H1 (cell line): ENCODE measurements at regions of chr3 and their contacts with region 1.

Region 1: DNA sequence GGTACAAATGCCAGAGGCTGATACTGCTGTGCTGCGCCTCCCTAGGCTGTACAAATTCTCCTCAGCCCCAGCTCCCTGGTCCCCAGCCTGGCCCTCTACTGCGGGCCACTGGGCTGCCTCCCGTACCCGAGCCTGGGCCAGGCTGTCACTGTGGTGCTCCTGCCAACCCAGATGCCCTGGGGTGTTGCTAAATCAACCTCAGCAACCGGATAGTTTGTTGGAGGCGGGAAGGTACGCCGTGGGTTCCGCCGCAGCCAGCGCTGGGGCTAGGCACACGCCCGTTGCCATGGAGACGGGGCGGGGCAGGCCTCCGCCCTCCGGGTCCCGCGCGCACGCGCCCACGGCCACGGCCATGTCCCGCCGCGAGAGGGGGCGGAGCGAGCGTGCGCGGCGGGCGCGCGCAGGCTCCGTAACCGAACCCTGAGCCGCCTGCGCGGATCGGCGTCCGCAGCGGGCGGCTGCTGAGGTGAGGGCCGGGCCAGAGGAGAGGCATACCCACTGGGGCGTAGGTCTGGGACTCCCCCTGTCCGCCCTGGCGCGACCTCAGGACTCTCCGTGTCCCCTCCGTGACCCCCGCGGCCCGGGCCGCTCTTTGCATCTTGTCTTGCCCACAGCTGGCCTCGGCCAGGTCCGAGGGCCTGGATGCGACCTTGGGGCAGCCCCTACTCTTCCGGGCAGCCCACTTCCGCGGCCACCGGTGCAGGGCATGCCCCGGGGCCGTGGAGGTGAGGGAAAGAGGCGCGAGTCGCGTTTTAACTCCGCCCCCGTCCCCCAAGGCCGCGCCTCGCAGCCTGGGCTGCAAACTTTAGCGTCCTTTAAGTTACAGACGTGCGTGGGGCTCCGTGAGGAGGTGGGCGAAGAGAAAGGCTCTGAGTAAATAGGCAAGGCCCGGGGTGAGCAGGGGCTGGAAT is at the start of gene TEX264:
- DNase-seq: peak in 1 of 2 experiments; percentile 82
- H3K4me3 ChIP-seq: peak within 1 kb of the TSS; percentile 59 to 82 (median 69)
- H3K27ac ChIP-seq: no peak within 1 kb of the TSS
- H3K4me1 ChIP-seq: peaks cover 0 to 10% (median 5%) of the 10 kb centered on the region in 4 experiments; a peak in 4 of 7 replicates
- H3K27me3 ChIP-seq: no peaks in the 10 kb centered on the region
- CTCF ChIP-seq: no peak
- EP300 ChIP-seq: no peak
- POLR2A ChIP-seq: peak in 1 of 2 experiments; percentile 12; a peak in 1 of 3 replicates
- RAD21 ChIP-seq: no peak
- total RNA-seq, gene TEX264: 11.2 and 11.9 TPM in 2 replicates

Region 2: DNA sequence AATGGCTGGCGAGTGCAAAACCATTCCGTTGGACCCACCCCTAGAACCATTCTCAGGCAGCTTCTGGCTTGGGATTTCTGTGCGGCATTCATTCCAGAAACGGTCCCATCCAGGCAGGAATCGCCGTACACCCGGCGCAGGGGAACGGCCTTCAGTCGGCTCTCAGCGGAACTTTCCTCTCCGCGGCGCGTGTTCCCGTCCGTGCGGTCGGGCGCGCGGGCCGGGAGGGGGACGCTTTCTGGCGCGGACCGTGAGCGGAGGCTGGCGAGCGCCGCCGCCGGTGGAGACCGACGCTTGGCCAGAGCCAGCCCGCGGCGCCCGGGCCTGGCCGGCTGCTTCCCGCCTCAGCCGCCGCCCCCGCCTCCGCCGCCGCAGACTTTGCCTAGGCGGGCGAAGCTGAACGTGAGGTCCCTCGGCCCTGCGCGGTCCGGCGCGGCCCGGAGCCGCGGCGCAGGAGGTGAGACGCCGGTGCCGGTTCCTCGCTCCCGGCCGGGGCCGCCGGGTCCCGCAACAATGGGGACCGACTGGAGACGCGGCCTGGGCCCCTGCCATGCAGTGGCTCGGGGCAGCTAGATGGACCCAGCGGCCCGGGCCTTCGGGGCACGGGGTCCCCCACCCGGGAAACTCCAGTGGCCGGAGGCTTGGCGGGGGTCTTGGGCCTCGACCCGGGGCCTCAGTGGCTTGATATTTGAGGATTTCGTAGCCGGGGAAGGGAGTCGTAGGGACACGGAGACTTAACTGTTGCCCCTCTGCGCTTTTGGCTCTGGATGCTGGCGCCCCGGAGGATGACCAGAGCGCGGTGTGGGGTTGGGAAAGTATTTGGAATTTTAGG is 132.4 kb before region 1 on chr3 and contains the start of gene RAD54L2:
- CTCF ChIA-PET with region 1: interaction called, 10 read pairs
- POLR2A ChIA-PET with region 1: interaction called, 4 read pairs
- DNase-seq: peak; percentile 33 to 90
- H3K4me3 ChIP-seq: peak within 1 kb of the TSS; percentile 59 to 99 (median 92)
- H3K27ac ChIP-seq: peak within 1 kb of the TSS; percentile 73; the same call in 1 of the 2 replicates
- H3K4me1 ChIP-seq: peaks cover 0 to 7% (median 3%) of the 10 kb centered on the region in 4 experiments; a peak in 5 of 7 replicates
- H3K27me3 ChIP-seq: no peaks in the 10 kb centered on the region
- CTCF ChIP-seq: peak in 1 of 3 experiments; percentile 27; a peak in 2 of 4 replicates
- EP300 ChIP-seq: peak in 1 of 2 experiments; percentile 50; a peak in 1 of 3 replicates
- POLR2A ChIP-seq: peak; percentile 57 to 88
- RAD21 ChIP-seq: no peak
- total RNA-seq, gene RAD54L2: 32.6 and 35.2 TPM in 2 replicates

Region 3: GRCh38 chr3:51646091-51646490 is 25.0 kb before region 1 on chr3:
- CTCF ChIA-PET with region 1: interaction called, 50 read pairs
- POLR2A ChIA-PET with region 1: no interaction called
- DNase-seq: no peak
- H3K4me3 ChIP-seq: no peak overlapping the region
- H3K27ac ChIP-seq: no peak overlapping the region
- H3K4me1 ChIP-seq: no peaks in the 10 kb centered on the region
- H3K27me3 ChIP-seq: no peaks in the 10 kb centered on the region
- CTCF ChIP-seq: no peak
- EP300 ChIP-seq: no peak
- POLR2A ChIP-seq: no peak
- RAD21 ChIP-seq: no peak

Region 4: DNA sequence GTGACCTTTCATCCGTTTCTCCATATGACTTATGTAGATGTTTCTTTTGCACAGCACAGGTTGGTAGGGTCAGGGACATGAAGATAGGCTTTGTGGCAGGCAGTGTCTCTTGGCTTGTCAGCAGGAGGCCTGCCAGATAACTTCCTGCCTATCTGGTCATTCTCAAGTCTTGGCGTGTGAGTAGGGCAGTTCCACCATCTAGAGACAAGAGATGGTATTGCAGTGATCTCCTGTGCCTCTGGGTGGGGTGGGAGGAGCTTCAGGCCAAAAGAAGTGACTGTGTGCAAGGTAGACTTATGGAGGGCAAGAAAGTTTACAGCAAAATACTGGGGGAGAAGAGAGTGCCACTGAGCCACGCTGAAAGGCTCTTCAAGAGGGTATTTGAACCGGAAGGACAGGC is 11.0 kb after region 1 on chr3:
- CTCF ChIA-PET with region 1: interaction called, 123 read pairs
- POLR2A ChIA-PET with region 1: interaction called, 37 read pairs
- DNase-seq: peak; percentile 61 to 65
- H3K4me3 ChIP-seq: no peak overlapping the region
- H3K27ac ChIP-seq: no peak overlapping the region
- H3K4me1 ChIP-seq: peaks cover 0 to 9% (median 3%) of the 10 kb centered on the region in 4 experiments; a peak in 3 of 7 replicates
- H3K27me3 ChIP-seq: no peaks in the 10 kb centered on the region
- CTCF ChIP-seq: peak; percentile 72 to 94 (median 78)
- EP300 ChIP-seq: no peak
- POLR2A ChIP-seq: no peak
- RAD21 ChIP-seq: peak; percentile 93